PC-9 (cell line): ENCODE measurements at regions of chr6 and their contacts with region 1.

Region 1: GRCh38 chr6:11392778-11393507 is 144.6 kb upstream of the TMEM170B start:
- DNase-seq: peak; percentile 75 to 77
- H3K4me3 ChIP-seq: no peak overlapping the region; the same call in 1 of the 2 replicates
- H3K27ac ChIP-seq: peak overlapping the region; percentile 89
- H3K4me1 ChIP-seq: peaks cover 63% of the 10 kb centered on the region
- H3K27me3 ChIP-seq: no peaks in the 10 kb centered on the region
- CTCF ChIP-seq: no peak

Region 2: GRCh38 chr6:10487668-10488327 is 905.1 kb before region 1 on chr6:
- CTCF ChIA-PET with region 1: no interaction called
- POLR2A ChIA-PET with region 1: no interaction called
- intact Hi-C with region 1: no loop called
- DNase-seq: no peak
- H3K4me3 ChIP-seq: no peak overlapping the region
- H3K27ac ChIP-seq: no peak overlapping the region
- H3K4me1 ChIP-seq: no peaks in the 10 kb centered on the region
- H3K27me3 ChIP-seq: no peaks in the 10 kb centered on the region
- CTCF ChIP-seq: no peak

Region 3: GRCh38 chr6:11120271-11121005 is 272.5 kb before region 1 on chr6:
- CTCF ChIA-PET with region 1: no interaction called
- POLR2A ChIA-PET with region 1: no interaction called
- intact Hi-C with region 1: no loop called
- DNase-seq: peak; percentile 17 to 39
- H3K4me3 ChIP-seq: no peak overlapping the region
- H3K27ac ChIP-seq: 0 out of 2 replicates have a peak overlapping the region, but pooled peaks have one; percentile 29
- H3K4me1 ChIP-seq: peaks cover 15% of the 10 kb centered on the region
- H3K27me3 ChIP-seq: no peaks in the 10 kb centered on the region
- CTCF ChIP-seq: no peak

Region 4: DNA sequence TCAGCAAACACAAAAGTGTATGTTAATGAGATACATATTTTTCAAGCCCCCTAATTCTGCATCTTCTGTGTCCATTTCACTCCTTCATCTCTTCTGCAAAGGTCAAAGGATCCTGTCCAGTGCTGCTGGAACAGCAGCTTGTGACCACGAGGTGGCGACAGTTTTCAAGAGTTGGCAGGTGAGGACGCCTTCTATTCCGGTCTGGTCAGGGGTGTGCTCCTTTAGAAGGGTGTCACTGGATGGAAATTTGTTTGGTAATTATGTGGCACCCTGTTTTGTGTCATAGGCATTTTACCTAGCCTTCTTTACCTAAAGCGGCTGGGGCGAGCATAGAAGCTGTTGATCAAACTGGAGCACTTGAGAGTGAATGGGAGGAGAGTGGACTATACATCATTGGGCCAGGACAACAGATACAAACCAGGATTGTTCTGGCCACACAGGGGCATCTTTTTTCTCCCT is 248.5 kb before region 1 on chr6:
- CTCF ChIA-PET with region 1: no interaction called
- POLR2A ChIA-PET with region 1: no interaction called
- intact Hi-C with region 1: loop called (anchors 1 kb)
- DNase-seq: peak; percentile 59 to 82
- H3K4me3 ChIP-seq: no peak overlapping the region
- H3K27ac ChIP-seq: no peak overlapping the region
- H3K4me1 ChIP-seq: no peaks in the 10 kb centered on the region
- H3K27me3 ChIP-seq: no peaks in the 10 kb centered on the region
- CTCF ChIP-seq: peak; percentile 84

Region 5: DNA sequence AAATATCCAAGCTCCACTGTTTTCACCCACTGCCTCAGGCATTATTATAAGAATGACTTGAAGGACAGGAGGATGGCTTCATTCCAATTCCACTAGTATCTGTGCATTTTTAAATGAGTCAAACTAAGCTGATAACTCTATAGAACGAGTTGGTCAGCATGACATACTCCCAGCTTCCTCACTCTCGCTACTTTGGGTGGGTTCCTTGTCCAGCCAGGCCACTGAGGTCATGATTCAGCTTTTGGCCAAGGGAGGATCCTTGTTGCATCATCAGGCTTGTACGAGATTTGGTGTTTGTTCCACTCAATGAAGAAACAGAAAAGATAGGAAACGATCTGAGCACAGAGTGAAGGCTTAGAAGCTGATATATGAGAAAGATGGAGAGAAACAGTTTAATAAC is 180.3 kb before region 1 on chr6:
- CTCF ChIA-PET with region 1: no interaction called
- POLR2A ChIA-PET with region 1: interaction called, 9 read pairs
- intact Hi-C with region 1: loop called (anchors 1 kb)
- DNase-seq: peak; percentile 67 to 84
- H3K4me3 ChIP-seq: no peak overlapping the region
- H3K27ac ChIP-seq: peak overlapping the region; percentile 81
- H3K4me1 ChIP-seq: peaks cover 35% of the 10 kb centered on the region
- H3K27me3 ChIP-seq: no peaks in the 10 kb centered on the region
- CTCF ChIP-seq: no peak

Region 6: DNA sequence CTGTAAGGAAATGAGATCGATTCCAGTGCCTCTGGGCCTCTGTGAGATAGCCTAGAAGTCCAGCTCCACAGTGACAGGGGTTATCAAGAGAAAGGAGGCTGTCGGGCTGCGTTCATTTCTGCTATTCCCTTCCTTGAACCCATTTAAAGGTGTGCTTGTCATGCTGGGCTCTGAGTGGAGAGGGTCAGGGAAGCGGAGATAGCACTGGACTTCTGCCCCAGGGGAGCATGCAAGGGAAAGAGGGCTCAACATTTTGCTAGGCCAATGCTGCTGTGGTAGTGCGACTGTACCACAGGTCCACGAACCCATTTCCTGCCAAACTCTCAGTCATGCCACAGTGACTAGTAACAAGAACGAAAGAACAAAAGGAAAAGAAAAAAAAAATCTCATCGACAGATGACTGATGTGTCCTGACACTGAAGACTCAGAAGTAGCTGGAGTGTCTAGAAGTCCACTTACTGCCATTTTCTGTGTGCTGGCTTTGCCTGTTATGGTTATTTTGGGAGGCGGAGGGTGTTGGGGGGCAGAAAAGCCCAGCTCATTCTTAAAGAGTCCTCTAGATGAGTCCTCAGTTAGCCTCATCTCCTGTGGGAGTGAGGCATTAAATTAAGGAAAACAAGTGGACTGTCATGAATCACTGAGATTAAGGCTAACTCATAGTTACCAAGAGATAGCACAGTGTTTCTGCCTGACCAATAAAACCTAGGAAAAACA is 168.5 kb before region 1 on chr6:
- CTCF ChIA-PET with region 1: no interaction called
- POLR2A ChIA-PET with region 1: no interaction called
- intact Hi-C with region 1: no loop called
- DNase-seq: no peak
- H3K4me3 ChIP-seq: no peak overlapping the region
- H3K27ac ChIP-seq: no peak overlapping the region
- H3K4me1 ChIP-seq: peaks cover 18% of the 10 kb centered on the region
- H3K27me3 ChIP-seq: no peaks in the 10 kb centered on the region
- CTCF ChIP-seq: no peak

Region 7: GRCh38 chr6:11298651-11299420 is 94.1 kb before region 1 on chr6:
- CTCF ChIA-PET with region 1: no interaction called
- POLR2A ChIA-PET with region 1: no interaction called
- intact Hi-C with region 1: no loop called
- DNase-seq: peak in 1 of 2 experiments; percentile 40
- H3K4me3 ChIP-seq: no peak overlapping the region
- H3K27ac ChIP-seq: no peak overlapping the region
- H3K4me1 ChIP-seq: no peaks in the 10 kb centered on the region
- H3K27me3 ChIP-seq: no peaks in the 10 kb centered on the region
- CTCF ChIP-seq: no peak

Region 8: GRCh38 chr6:11414176-11414963 is 21.4 kb after region 1 on chr6:
- CTCF ChIA-PET with region 1: no interaction called
- POLR2A ChIA-PET with region 1: interaction called, 17 read pairs
- intact Hi-C with region 1: loop called (anchors 1 kb)
- DNase-seq: peak; percentile 69 to 94
- H3K4me3 ChIP-seq: peak overlapping the region; percentile 19; the same call in 1 of the 2 replicates
- H3K27ac ChIP-seq: peak overlapping the region; percentile 95
- H3K4me1 ChIP-seq: peaks cover 46% of the 10 kb centered on the region
- H3K27me3 ChIP-seq: no peaks in the 10 kb centered on the region
- CTCF ChIP-seq: no peak

Region 9: DNA sequence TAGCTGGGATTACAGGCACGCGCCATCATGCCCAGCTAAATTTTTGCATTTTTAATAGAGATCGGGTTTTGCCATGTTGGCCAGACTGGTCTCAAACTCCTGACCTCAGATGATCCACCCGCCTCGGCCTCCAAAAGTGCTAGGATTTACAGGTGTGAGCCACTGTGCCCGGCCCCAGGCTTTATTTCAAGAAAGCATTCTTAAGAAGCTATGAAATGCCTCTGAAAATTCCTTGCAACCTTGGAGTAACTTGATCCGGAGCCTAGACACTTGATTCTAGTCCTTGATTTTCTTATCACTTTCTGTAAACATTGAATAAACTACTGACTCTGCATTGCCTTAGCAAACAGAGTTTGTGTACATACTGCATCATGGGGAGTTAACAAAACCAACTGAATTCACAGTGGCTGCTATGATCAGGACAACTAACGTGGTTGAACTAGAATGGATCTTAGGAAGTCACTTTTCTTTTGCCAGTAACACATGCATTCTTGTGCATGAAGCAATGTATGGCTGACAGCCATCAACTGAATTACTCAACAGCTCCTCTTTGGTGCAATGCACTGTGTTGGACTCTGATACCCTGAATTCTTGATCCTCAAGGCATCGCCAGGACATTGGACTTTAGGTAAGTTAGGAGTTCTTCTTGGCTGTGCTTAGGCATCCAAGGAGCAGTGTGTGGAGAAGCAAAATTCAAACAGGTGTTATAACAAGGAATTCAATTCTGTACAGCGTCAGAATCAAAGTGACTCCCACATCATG is 41.8 kb after region 1 on chr6:
- CTCF ChIA-PET with region 1: no interaction called
- POLR2A ChIA-PET with region 1: no interaction called
- intact Hi-C with region 1: loop called (anchors 1 kb)
- DNase-seq: peak; percentile 79 to 98
- H3K4me3 ChIP-seq: no peak overlapping the region
- H3K27ac ChIP-seq: peak overlapping the region; percentile 87
- H3K4me1 ChIP-seq: peaks cover 52% of the 10 kb centered on the region
- H3K27me3 ChIP-seq: no peaks in the 10 kb centered on the region
- CTCF ChIP-seq: no peak